ENCODE measurements at regions of chr3 and their contacts with region 1.

Region 1: DNA sequence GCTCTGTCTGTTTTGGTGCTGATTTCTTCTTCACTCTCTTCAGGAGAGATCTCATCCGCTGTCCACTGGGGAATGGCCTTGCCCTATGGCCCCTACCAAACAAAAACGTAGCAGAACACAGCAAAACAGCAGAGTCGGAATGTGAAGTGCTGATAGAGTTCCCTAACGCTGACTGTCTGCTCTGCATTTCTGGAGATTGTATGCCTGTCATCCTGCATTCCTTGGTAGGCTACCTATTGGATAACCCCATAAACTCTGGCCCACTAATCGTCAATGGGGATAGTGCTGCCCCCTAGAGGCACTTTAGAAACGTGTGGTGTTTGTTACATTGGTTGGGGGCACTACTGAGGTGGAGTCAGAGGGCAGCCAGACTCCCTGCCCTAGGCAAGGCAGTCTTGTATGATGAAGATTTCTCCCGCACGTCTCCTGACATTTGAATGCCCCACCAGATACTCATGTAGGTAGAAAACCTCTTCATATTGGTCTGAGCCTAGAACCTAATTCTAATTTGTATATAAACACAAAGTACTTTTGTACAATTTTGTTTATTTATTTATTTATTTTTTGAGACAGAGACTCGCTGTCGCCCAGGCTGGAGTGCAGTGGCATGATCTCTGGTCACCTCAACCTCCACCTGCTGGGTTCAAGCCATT is 15.6 kb upstream of the MAGEF1 start:
- DNase-seq: no peak
- H3K4me3 ChIP-seq: no peak overlapping the region
- H3K27me3 ChIP-seq: peaks cover 4% of the 10 kb centered on the region; the same call in 1 of the 2 replicates
- CTCF ChIP-seq: peak; percentile 80

Region 2: DNA sequence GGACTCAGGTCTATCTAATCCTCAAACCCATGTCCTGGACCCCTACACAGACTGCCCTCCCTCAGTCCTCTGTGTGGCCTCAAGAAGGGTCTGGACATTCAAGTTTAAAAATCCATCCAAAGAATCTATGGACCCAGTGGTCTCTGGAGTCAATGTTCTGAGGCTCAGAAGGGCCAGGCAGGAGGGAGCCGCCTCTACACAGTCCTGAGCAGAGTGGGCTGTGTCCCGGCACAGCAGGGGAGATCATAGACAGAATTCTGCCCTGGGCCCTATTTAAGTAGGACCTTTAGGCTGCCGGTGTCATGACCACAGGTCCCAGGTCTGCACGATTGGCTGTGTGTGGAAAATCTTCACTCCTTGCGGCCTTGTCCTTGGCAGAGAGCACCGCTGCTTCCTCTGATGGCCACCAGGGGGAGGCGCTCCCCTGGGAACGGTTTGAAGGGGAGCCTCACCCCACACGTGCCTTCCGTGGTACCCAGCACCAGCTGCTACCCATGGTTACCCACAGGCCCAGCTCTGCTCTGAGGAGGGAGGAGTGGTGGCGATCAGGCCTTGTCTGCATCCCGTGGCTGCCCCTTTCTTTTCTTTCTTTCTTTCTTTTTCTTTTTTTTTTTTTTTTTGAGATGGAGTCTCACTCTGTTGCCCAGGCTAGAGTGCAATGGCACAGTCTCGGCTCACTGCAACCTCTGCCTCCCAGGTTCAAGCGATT is 309.7 kb before region 1 on chr3:
- CTCF ChIA-PET with region 1: no interaction called
- POLR2A ChIA-PET with region 1: no interaction called
- DNase-seq: no peak
- H3K4me3 ChIP-seq: no peak overlapping the region
- H3K27me3 ChIP-seq: no peaks in the 10 kb centered on the region
- CTCF ChIP-seq: peak; percentile 95

Region 3: DNA sequence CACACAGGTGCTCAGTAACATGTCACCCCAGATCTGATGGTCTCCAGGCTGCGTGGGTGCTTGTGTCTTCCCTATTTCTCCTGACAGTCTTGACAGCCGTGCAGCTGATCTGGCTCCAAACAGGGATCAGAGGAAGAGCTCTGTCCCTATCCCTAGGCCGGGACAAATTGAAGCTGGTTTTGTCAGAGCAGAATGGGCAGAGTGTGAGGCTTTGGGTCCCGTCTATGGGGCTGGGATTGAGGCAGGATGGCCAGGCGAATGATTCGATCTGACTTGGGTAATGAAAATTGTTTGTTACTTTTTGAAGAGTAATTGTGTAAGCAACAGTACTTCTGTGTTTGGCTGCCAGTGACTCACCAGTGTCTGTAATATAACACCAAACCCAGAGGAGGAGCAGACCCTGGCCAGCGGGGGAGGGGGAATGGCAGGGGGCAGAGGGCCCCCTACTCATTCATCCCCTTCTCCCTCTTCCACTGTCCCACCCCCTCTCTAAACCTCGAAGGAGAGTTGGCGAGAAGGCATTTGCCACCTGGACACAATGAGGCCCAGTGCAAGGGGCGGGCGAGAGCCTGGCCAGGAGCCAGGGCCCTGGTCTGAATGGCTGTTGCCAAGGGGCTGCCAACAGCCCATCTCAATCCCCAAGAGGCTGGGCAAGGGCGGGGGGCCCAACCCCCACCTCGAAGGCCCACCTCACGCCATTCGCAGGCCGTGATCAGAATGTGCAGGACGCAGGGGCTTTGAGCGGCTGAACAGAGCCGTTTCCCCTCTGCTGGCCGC is 10.7 kb before region 1 on chr3:
- CTCF ChIA-PET with region 1: interaction called, 10 read pairs
- POLR2A ChIA-PET with region 1: no interaction called
- DNase-seq: no peak
- H3K4me3 ChIP-seq: no peak overlapping the region
- H3K27me3 ChIP-seq: no peaks in the 10 kb centered on the region
- CTCF ChIP-seq: no peak

Region 4: DNA sequence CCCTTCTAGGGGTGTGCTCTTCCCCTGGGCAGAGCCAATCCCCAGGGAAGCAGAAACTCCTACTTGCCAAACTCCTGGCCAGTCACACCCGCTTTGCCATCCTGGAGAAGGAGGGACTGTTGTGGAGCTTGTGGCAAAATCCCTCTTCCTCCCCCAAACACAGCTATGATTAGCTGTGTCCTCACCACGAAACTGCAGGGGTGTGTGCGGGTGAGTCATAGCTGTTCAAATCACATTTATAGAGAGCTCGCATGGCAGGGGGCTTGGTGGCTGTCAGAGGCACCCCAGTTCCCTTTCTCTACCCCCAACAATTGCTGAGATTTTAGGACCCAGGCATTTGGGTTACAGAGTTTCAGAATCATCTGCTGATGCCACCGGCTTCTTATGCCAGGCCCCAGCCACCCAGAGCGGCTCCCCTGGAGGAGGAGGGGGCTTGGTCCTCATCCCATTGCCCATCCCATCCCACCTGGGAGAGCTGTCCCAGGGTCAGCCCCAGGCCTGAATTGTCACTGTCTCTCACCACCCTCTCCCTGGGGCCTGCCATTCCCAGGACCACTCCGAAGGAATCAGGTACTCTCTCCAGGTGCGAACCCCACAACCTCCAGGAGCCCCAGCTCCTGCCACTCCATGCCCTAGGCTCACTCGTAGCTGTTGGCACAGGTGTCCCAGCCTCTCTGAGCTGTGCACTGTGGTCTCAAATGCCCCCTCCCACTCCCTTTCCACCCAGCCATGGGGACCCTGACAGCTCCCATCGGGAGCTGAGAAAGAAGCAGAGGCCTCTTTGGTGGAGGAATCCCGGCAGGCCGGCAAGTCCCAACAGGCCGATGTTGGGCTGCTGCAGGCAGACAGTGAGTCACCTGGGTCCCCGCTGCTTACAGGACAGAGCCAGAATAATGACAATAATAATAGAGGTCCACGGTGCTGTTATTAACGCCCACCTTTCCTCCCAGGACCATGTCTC is 13.3 kb after region 1 on chr3:
- CTCF ChIA-PET with region 1: interaction called, 14 read pairs
- POLR2A ChIA-PET with region 1: no interaction called
- DNase-seq: no peak
- H3K4me3 ChIP-seq: no peak overlapping the region
- H3K27me3 ChIP-seq: no peaks in the 10 kb centered on the region; the same call in 1 of the 2 replicates
- CTCF ChIP-seq: no peak

Region 5: DNA sequence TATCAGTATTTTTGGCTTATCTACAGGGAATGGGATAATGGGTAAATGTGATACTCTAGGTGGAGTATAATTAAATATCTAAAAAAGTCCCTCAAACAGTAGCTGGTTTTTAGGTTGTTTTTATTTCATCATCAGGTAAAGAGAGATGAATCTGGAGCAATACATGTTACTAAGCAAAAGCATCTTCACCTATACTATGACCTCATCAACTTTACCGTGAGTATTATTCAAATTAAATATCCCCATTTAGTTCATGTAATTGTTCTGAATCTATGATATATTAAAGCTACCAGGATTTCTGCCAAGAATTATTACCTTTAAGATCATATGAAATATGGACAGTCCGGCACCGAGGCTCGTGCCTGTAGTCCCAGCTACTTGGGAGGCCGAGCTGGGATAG is 132.4 kb after region 1 on chr3:
- CTCF ChIA-PET with region 1: no interaction called
- POLR2A ChIA-PET with region 1: no interaction called
- DNase-seq: no peak
- H3K4me3 ChIP-seq: no peak overlapping the region
- H3K27me3 ChIP-seq: no peaks in the 10 kb centered on the region
- CTCF ChIP-seq: no peak

Measured in BJ (cell line).